Endothelial cell of umbilical vein (primary cell): ENCODE measurements at regions of chr1 and their contacts with region 1.

Region 1: GRCh38 chr1:187516874-187517273 is 688.1 kb downstream of the PLA2G4A start:
- DNase-seq: no peak
- H3K4me3 ChIP-seq: no peak overlapping the region
- H3K27ac ChIP-seq: no peak overlapping the region
- H3K4me1 ChIP-seq: no peaks in the 10 kb centered on the region
- H3K27me3 ChIP-seq: no peaks in the 10 kb centered on the region
- CTCF ChIP-seq: no peak
- POLR2A ChIP-seq: no peak

Region 2: GRCh38 chr1:187384504-187384903 is 132.4 kb before region 1 on chr1:
- CTCF ChIA-PET with region 1: no interaction called
- POLR2A ChIA-PET with region 1: no interaction called
- dilution Hi-C with region 1: no loop called
- intact Hi-C with region 1: loop called (anchors 5 kb)
- DNase-seq: no peak
- H3K4me3 ChIP-seq: no peak overlapping the region
- H3K27ac ChIP-seq: no peak overlapping the region
- H3K4me1 ChIP-seq: no peaks in the 10 kb centered on the region
- H3K27me3 ChIP-seq: no peaks in the 10 kb centered on the region
- CTCF ChIP-seq: no peak
- POLR2A ChIP-seq: no peak